Sigmoid colon (tissue), 7 donors: ENCODE measurements at regions of chr1 and their contacts with region 1.

Region 1: DNA sequence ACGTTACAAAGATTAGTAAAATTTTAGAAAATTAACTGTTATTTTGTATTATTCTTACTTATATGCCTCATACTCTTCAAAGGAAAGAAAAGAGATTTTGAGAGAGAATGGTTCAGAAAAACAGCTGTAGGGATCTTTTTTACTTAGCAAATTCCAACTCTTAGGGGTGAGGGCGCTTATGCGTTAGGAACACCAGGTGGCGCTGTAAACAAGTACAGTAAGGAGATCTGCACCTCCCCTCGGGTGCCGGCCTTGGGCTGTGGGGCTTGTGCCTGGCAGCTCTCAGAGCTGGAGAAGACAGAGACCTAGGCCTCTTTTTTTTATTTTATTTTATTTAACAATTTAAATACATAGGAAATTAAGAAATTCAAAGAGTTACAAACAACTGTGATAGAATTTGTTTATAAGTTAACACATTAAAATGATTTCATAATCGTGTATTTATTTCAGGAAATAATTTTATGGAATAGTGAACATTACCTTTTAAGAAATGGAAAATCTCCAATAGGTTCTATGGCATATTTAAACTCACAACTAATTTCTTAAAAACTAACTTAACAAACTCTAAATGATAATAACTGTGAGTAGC is 32.6 kb downstream of the UTP25 start:
- DNase-seq: peak; percentile 80
- H3K4me3 ChIP-seq: no peak overlapping the region
- H3K27ac ChIP-seq: no peak overlapping the region
- H3K4me1 ChIP-seq: no peaks in the 10 kb centered on the region
- H3K27me3 ChIP-seq: peaks cover 0 to 6% (median 0%) of the 10 kb centered on the region in 3 donors
- CTCF ChIP-seq: peak; percentile 15 to 87 (median 64)
- EP300 ChIP-seq: no peak
- POLR2A ChIP-seq: no peak

Region 2: DNA sequence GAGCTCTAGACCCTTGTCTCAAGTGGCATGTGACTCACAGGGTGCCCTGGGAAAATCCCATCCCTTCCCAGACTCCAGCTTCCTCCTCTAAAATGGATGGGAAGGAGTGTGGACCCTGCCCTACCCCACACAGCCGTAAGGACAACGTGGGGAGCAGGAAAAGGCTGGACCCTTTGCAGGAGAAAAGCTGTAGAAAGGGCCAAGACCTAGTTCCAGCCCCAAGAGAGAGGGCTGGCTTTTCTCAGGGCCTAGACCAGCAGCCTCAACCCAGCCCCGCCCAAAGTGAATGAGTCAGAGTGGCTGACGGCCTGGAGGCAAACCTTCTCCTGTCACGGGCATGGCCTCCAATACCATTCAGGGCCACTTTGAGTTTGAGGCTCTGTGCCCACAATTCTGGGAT is 209.2 kb before region 1 on chr1:
- intact Hi-C with region 1: no loop called
- DNase-seq: no peak
- H3K4me3 ChIP-seq: no peak overlapping the region
- H3K27ac ChIP-seq: peak overlapping the region in 1 of 4 donors; percentile 36
- H3K4me1 ChIP-seq: peaks cover 0 to 48% (median 30%) of the 10 kb centered on the region in 4 donors
- H3K27me3 ChIP-seq: no peaks in the 10 kb centered on the region
- CTCF ChIP-seq: no peak
- EP300 ChIP-seq: no peak
- POLR2A ChIP-seq: no peak

Region 3: DNA sequence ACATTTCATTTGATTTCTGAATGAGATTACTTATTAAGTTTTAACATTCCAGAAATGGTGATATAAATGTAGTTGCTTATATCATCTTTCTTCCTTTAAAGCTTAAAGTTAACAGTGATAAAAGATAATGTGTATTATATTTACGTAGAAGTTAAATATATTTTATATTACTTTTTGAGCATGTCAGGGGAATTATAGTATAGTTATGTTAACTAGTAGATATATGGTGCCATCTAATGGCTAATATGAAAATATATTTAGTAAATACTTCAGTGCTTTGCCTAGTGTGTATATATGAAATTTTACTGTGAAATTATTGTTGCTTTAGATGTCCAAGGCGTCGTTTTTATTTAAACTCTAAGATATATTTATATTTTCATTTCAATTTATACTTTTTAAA is 129.1 kb after region 1 on chr1:
- intact Hi-C with region 1: loop called (anchors 1 kb)
- DNase-seq: no peak
- H3K4me3 ChIP-seq: no peak overlapping the region
- H3K27ac ChIP-seq: no peak overlapping the region
- H3K4me1 ChIP-seq: no peaks in the 10 kb centered on the region
- H3K27me3 ChIP-seq: peaks cover 0 to 3% (median 0%) of the 10 kb centered on the region in 3 donors
- CTCF ChIP-seq: peak in 2 of 4 experiments; percentile 23 to 29
- EP300 ChIP-seq: no peak
- POLR2A ChIP-seq: no peak